Adrenal gland (tissue), 19 donors: ENCODE measurements at regions of chr20 and their contacts with region 1.

Region 1: DNA sequence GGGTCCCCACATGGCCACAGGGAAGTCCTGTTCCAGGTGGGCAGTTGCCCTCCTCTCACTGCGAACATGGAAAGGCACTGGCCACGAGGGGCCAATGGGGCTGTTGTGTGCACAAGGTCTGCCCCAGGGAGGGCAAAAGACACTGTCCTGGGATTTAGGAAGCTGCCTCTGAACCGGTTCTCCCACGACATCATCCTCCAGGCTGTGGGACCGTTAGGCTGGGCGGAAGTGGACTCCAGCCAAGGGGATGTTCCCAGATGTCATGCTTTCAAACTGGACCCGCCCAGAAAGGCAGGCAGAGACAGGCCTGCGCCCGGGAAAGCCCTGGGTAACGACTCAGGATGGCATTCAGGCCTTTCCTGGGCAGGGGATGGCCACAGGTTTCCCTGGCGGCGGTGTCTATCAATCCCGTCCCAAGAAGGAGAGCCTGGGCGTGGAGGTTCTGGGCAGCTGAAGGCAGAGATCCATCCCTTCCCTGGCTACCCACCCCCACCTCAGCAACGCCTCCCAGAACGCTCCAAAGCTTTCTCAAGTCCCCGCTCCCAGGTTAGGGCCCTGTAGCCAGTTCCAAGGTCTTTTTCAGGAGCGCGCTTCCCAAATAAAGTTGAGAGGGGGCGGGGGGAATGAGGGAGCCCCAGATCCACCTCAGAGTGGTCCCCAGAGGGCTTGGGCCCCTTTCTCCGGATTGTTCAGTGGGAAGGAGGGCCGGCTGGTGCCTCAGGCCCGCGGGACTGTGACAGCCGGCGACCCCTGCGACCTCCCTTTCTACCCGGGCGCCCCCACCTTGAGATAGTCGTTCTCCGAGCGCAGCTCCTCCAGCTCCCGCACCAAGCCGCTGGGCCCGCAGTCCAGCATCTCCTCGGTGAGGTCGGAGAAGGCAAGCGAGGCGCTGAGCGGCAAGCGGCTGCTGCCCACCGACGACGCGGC is 13.8 kb upstream of the TLDC2 start:
- DNase-seq: peak; percentile 89 to 97 (median 95)
- H3K4me3 ChIP-seq: peak overlapping the region; percentile 7 to 95 (median 30)
- H3K27ac ChIP-seq: peak overlapping the region; percentile 75 to 96 (median 91)
- H3K4me1 ChIP-seq: peaks cover 54 to 56% of the 10 kb centered on the region in 2 donors
- H3K27me3 ChIP-seq: no peaks in the 10 kb centered on the region
- CTCF ChIP-seq: no peak
- POLR2A ChIP-seq: peak; percentile 59 to 94

Region 2: GRCh38 chr20:36666181-36666740 is 195.9 kb before region 1 on chr20:
- intact Hi-C with region 1: no loop called
- DNase-seq: no peak
- H3K4me3 ChIP-seq: no peak overlapping the region
- H3K27ac ChIP-seq: no peak overlapping the region
- H3K4me1 ChIP-seq: no peaks in the 10 kb centered on the region
- H3K27me3 ChIP-seq: no peaks in the 10 kb centered on the region
- CTCF ChIP-seq: peak in 2 of 6 experiments; percentile 9 to 18
- POLR2A ChIP-seq: no peak

Region 3: DNA sequence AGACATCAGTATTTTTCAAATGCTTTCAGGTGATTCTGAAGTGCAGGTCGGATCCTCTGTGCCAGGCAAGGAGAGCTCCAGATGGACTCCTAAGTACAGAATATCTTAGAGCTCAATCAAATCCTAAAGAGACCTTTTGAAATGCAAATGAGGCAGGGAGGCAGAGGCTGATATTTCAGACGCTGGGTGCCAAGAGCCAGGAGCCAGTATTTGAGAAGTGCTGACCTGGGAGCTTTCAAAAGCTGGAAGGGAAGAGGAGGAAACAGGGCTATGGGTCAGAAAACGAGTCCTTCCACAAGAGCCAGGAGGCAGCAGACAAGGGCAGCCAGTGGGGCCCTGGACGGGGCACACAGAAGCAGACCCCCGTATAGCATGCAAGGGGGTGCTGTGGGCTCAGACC is 42.5 kb before region 1 on chr20:
- intact Hi-C with region 1: loop called in 1 of 2 experiments (anchors 10 kb)
- DNase-seq: no peak
- H3K4me3 ChIP-seq: no peak overlapping the region
- H3K27ac ChIP-seq: peak overlapping the region in 2 of 5 donors; percentile 34 to 45
- H3K4me1 ChIP-seq: peaks cover 0 to 22% of the 10 kb centered on the region in 2 donors
- H3K27me3 ChIP-seq: no peaks in the 10 kb centered on the region
- CTCF ChIP-seq: no peak
- POLR2A ChIP-seq: no peak

Region 4: GRCh38 chr20:36919715-36920333 is 57.7 kb after region 1 on chr20:
- intact Hi-C with region 1: no loop called
- DNase-seq: peak in 3 of 7 donors; percentile 28 to 46 (median 39)
- H3K4me3 ChIP-seq: no peak overlapping the region
- H3K27ac ChIP-seq: no peak overlapping the region
- H3K4me1 ChIP-seq: no peaks in the 10 kb centered on the region
- H3K27me3 ChIP-seq: no peaks in the 10 kb centered on the region
- CTCF ChIP-seq: peak; percentile 83 to 92 (median 84)
- POLR2A ChIP-seq: no peak